ENCODE measurements at regions of chr16 and their contacts with region 1.

Region 1: GRCh38 chr16:4649744-4650442 is 25.3 kb downstream of the MGRN1 start:
- DNase-seq: peak; percentile 48
- ATAC-seq: peak; percentile 25
- H3K4me3 Mint-ChIP-seq: no peak overlapping the region
- H3K27ac Mint-ChIP-seq: peak overlapping the region; percentile 37
- H3K4me1 Mint-ChIP-seq: peaks cover 52% of the 10 kb centered on the region
- H3K27me3 Mint-ChIP-seq: no peaks in the 10 kb centered on the region

Region 2: DNA sequence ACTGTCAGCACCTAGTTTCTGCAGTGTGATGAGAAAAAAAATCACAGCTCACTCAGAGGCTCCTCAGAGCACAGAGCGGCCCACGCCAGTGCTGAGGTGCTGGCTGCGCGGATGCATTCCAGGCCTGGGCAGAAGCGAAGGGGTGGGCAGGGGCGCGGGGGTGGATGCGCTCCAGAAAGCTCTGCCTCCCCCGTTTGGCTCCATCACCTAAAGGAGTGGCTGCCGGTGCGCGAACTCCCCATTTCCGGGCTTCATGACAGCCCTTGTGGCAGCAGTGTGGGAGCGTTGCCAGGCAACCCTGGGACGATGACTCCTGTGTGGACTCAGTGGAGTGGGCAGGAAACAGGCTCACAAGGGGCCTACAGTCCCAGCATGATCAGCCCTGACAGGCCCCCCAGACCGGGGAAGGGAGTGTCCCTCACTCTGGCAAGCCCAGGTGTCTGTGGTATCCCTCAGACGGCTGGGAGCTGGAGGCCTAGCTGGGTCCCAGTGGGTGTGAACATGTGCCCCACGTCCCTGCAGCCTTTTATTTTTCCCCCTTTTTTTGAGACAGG is 10.6 kb after region 1 on chr16:
- CTCF ChIA-PET with region 1: interaction called, 18 read pairs
- POLR2A ChIA-PET with region 1: no interaction called
- DNase-seq: peak; percentile 87
- ATAC-seq: peak; percentile 78
- H3K4me3 Mint-ChIP-seq: peak overlapping the region; percentile 42
- H3K27ac Mint-ChIP-seq: peak overlapping the region; percentile 92
- H3K4me1 Mint-ChIP-seq: peaks cover 68% of the 10 kb centered on the region
- H3K27me3 Mint-ChIP-seq: no peaks in the 10 kb centered on the region

Measured in activated CD8-positive, alpha-beta T cell treated with anti-CD3 and anti-CD28 coated beads, Interleukin-2, amount 10 ng/mL, durations not matched to agents 7 days and 5 days (primary cell).